GM12878 (cell line): ENCODE measurements at regions of chr10 and their contacts with region 1.

Region 1: DNA sequence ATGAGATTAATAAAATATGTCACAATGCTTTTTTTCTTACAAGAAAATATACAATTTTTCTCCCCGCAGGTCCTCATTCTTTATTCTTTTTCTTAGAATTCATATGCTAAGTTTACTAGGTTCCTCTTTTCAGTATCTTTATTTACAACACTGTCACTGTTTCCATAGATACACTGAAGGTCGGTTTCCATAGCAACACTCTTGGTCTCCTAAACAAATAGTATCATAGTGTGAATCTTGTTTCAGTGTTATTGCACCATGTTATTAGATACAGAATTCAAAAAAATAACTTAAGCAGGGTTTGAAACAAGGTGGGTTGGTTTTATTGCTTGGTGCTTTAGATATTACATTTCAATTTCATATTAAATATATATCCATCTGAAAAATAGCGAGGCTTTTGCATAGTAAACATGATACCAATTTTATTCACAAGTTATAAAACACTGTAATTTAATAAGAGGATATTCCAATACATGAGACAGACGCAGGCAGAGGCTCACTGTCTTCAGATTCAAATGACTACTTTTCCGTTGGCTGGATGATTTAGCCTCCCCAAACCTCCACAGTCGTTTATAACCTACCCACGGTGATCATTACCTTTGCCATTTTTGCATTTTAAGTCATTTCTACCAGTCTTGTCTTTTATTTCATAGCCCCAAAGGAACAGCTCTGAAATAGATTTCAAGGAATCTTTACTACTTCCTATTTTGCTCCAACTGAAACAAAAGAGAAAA is 88.9 kb upstream of the KLF6 start:
- DNase-seq: peak; percentile 83
- ATAC-seq: peak; percentile 50
- H3K4me3 ChIP-seq: no peak overlapping the region
- H3K27ac ChIP-seq: peak overlapping the region; percentile 90
- H3K4me1 ChIP-seq: peaks cover 50% of the 10 kb centered on the region
- H3K27me3 ChIP-seq: no peaks in the 10 kb centered on the region
- CTCF ChIP-seq: no peak
- EP300 ChIP-seq: peak; percentile 97 to 100
- POLR2A ChIP-seq: no peak
- RAD21 ChIP-seq: peak; percentile 16; the same call in 1 of the 2 replicates

Region 2: DNA sequence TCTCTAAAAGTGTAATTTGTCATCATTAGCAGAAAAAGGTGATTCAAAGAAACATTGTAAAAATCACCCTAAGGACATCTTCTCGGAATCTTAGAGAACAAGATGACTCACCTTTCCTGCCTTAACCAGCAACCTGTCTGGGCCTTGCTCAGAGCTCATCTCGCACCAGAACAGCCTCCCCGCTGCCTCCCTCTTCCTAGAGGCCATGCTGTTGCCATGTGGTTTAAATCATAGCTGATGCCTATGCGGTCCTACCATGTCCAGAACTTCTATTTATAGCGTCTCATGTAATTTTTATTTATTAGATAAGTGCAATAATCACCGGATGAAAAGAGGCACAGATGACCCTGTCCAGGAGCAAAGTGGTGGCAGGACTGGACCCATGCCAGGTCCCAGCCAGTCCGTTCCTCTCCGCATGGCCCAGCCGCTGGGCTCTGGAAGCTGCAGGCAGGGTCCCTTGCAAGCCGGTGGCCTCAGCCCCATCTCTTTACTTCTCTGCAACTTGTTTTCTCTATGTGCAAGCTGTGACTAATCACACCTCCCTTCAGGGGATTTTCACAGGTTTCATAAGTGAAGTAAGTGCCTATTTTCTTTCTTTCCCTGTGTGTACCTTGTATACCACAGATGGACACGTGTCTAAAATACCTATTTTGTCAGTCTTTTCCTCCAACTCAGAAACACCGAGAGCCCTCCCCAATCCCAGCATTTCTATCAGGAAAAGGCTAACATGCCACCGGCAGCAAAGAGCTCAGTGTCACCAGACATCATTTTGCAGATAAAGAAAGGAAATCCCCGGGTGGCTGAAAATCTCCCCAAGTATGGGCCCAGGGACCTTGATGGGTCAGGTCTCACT is 116.0 kb before region 1 on chr10:
- CTCF ChIA-PET with region 1: no interaction called
- POLR2A ChIA-PET with region 1: interaction called, 7 read pairs
- RAD21 ChIA-PET with region 1: interaction called, 16 read pairs
- SMC1A ChIA-PET with region 1: interaction called, 11 read pairs
- in situ Hi-C with region 1: no loop called
- intact Hi-C with region 1: no loop called
- DNase-seq: peak; percentile 82
- ATAC-seq: peak; percentile 88
- H3K4me3 ChIP-seq: no peak overlapping the region; the same call in 1 of the 2 replicates
- H3K27ac ChIP-seq: peak overlapping the region; percentile 76
- H3K4me1 ChIP-seq: peaks cover 35% of the 10 kb centered on the region
- H3K27me3 ChIP-seq: no peaks in the 10 kb centered on the region
- CTCF ChIP-seq: no peak
- EP300 ChIP-seq: peak; percentile 65 to 81; a peak in 3 of 4 replicates
- POLR2A ChIP-seq: peak; percentile 44; the same call in 1 of the 2 replicates
- RAD21 ChIP-seq: peak; percentile 9; the same call in 1 of the 2 replicates

Region 3: DNA sequence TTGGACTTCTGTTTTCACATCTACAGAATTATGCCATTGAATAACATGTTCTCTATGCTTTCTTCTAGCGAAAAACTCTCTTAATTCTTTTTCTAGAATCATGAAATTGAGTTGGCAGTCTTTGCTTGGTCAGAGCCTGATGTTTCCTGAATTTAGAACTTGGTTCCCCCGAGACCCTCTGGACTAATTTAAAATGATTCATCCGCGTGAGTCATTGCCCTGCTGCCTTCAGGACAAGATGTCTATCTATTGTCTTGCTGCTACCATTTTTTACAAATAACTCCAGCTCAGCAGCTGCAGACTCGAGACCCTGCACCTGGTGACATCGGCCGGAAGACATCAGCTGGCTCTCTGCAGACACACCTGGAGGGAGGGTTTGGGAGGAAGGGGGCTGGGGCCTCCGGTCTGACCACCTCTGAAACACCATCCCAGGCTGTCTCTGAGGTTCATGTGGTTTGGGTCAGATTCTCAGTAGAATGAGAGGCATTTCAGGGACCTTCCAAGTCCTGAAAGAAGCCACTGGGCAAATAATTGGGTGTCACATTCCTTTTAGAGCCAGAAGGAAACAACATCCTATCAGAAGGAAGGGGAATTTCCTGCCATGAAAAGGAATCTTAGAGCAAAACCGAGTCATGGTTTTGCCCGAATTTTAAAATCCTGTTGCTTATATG is 68.0 kb before region 1 on chr10:
- CTCF ChIA-PET with region 1: interaction called, 5 read pairs
- POLR2A ChIA-PET with region 1: interaction called, 23 read pairs
- RAD21 ChIA-PET with region 1: interaction called, 52 read pairs
- SMC1A ChIA-PET with region 1: interaction called, 53 read pairs
- in situ Hi-C with region 1: no loop called
- intact Hi-C with region 1: loop called (anchors 1 kb)
- DNase-seq: no peak
- ATAC-seq: peak; percentile 54
- H3K4me3 ChIP-seq: 0 out of 2 replicates have a peak overlapping the region, but pooled peaks have one; percentile 29
- H3K27ac ChIP-seq: peak overlapping the region; percentile 85
- H3K4me1 ChIP-seq: peaks cover 48% of the 10 kb centered on the region
- H3K27me3 ChIP-seq: no peaks in the 10 kb centered on the region
- CTCF ChIP-seq: no peak
- EP300 ChIP-seq: peak; percentile 46 to 65; a peak in 2 of 4 replicates
- POLR2A ChIP-seq: no peak; the same call in 1 of the 2 replicates
- RAD21 ChIP-seq: no peak

Region 4: GRCh38 chr10:3835770-3836169 is 38.1 kb before region 1 on chr10:
- CTCF ChIA-PET with region 1: interaction called, 6 read pairs
- POLR2A ChIA-PET with region 1: interaction called, 9 read pairs
- RAD21 ChIA-PET with region 1: interaction called, 51 read pairs
- SMC1A ChIA-PET with region 1: interaction called, 38 read pairs
- in situ Hi-C with region 1: no loop called
- intact Hi-C with region 1: loop called (anchors 5 kb)
- DNase-seq: no peak
- ATAC-seq: peak; percentile 75
- H3K4me3 ChIP-seq: peak overlapping the region; percentile 46
- H3K27ac ChIP-seq: peak overlapping the region; percentile 88
- H3K4me1 ChIP-seq: peaks cover 23% of the 10 kb centered on the region
- H3K27me3 ChIP-seq: no peaks in the 10 kb centered on the region
- CTCF ChIP-seq: no peak
- EP300 ChIP-seq: no peak; a peak in 1 of 4 replicates
- POLR2A ChIP-seq: no peak
- RAD21 ChIP-seq: no peak

Region 5: GRCh38 chr10:3902054-3902808 is 28.3 kb after region 1 on chr10:
- CTCF ChIA-PET with region 1: interaction called, 3 read pairs
- POLR2A ChIA-PET with region 1: interaction called, 12 read pairs
- RAD21 ChIA-PET with region 1: interaction called, 62 read pairs
- SMC1A ChIA-PET with region 1: interaction called, 72 read pairs
- in situ Hi-C with region 1: no loop called
- intact Hi-C with region 1: loop called (anchors 1 kb)
- DNase-seq: peak; percentile 93
- ATAC-seq: peak; percentile 95
- H3K4me3 ChIP-seq: no peak overlapping the region; the same call in 1 of the 2 replicates
- H3K27ac ChIP-seq: peak overlapping the region; percentile 75
- H3K4me1 ChIP-seq: peaks cover 25% of the 10 kb centered on the region
- H3K27me3 ChIP-seq: no peaks in the 10 kb centered on the region
- CTCF ChIP-seq: peak; percentile 18 to 38 (median 25); a peak in 4 of 6 replicates
- EP300 ChIP-seq: peak; percentile 99; a peak in 3 of 4 replicates
- POLR2A ChIP-seq: no peak
- RAD21 ChIP-seq: peak; percentile 70

Region 6: DNA sequence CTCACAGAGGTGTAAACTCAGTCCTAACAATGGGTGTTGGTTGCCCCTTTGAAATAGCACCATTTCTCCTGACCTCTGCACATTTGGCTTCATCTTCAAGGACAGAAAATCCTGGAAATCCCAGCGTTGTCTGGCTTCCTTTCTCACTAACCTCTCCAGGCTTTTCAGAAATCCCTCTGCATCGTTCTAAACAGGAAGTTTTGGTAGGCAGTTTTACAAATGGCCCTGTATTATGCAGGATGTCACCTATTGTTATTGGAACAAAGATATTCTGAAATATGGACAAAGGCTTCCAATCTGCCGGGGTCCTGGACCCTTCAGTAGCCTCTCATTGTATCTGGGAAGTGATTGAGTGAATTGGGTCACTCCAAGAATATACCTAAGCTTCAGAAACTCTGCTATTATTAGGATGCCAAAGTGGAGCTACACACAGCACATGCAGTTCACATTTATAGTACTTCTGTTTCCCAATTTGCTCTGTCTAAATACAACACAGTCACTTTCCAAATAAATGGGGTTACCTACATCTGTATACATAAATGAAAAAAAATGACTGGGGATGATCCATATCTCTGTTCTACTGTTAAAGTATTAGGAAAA is 45.9 kb after region 1 on chr10:
- CTCF ChIA-PET with region 1: no interaction called
- POLR2A ChIA-PET with region 1: no interaction called
- RAD21 ChIA-PET with region 1: no interaction called
- SMC1A ChIA-PET with region 1: no interaction called
- in situ Hi-C with region 1: no loop called
- intact Hi-C with region 1: no loop called
- DNase-seq: no peak
- ATAC-seq: no peak
- H3K4me3 ChIP-seq: no peak overlapping the region
- H3K27ac ChIP-seq: no peak overlapping the region
- H3K4me1 ChIP-seq: no peaks in the 10 kb centered on the region
- H3K27me3 ChIP-seq: no peaks in the 10 kb centered on the region
- CTCF ChIP-seq: no peak
- EP300 ChIP-seq: no peak
- POLR2A ChIP-seq: no peak
- RAD21 ChIP-seq: no peak

Region 7: GRCh38 chr10:4131407-4132228 is 257.7 kb after region 1 on chr10:
- CTCF ChIA-PET with region 1: no interaction called
- POLR2A ChIA-PET with region 1: no interaction called
- RAD21 ChIA-PET with region 1: no interaction called
- SMC1A ChIA-PET with region 1: interaction called, 3 read pairs
- in situ Hi-C with region 1: no loop called
- intact Hi-C with region 1: loop called (anchors 5 kb)
- DNase-seq: peak; percentile 66
- ATAC-seq: peak; percentile 85
- H3K4me3 ChIP-seq: 0 out of 2 replicates have a peak overlapping the region, but pooled peaks have one; percentile 19
- H3K27ac ChIP-seq: no peak overlapping the region; the same call in 1 of the 2 replicates
- H3K4me1 ChIP-seq: peaks cover 38% of the 10 kb centered on the region
- H3K27me3 ChIP-seq: no peaks in the 10 kb centered on the region; a peak in 1 of 4 replicates
- CTCF ChIP-seq: no peak
- EP300 ChIP-seq: peak; percentile 10 to 18; a peak in 1 of 4 replicates
- POLR2A ChIP-seq: no peak
- RAD21 ChIP-seq: no peak